Dorsolateral prefrontal cortex (tissue), 120 donors: ENCODE measurements at regions of chr1 and their contacts with region 1.

Region 1: GRCh38 chr1:41532206-41532975 is 47.9 kb upstream of the EDN2 start:
- DNase-seq: peak in 2 of 10 donors; percentile 6 to 14
- H3K4me3 ChIP-seq: no peak overlapping the region
- H3K27ac ChIP-seq: no peak overlapping the region
- H3K27me3 ChIP-seq: no peaks in the 10 kb centered on the region
- CTCF ChIP-seq: no peak

Region 2: GRCh38 chr1:41341772-41342562 is 190.4 kb before region 1 on chr1:
- intact Hi-C with region 1: no loop called
- DNase-seq: peak in 3 of 10 donors; percentile 19 to 57 (median 39)
- H3K4me3 ChIP-seq: no peak overlapping the region
- H3K27ac ChIP-seq: no peak overlapping the region
- H3K27me3 ChIP-seq: peaks cover 0 to 4% (median 0%) of the 10 kb centered on the region in 45 donors
- CTCF ChIP-seq: no peak

Region 3: GRCh38 chr1:41394959-41395956 is 137.1 kb before region 1 on chr1:
- intact Hi-C with region 1: no loop called
- DNase-seq: peak in 4 of 10 donors; percentile 14 to 61 (median 43)
- H3K4me3 ChIP-seq: peak overlapping the region in 1 of 59 donors; percentile 16
- H3K27ac ChIP-seq: no peak overlapping the region
- H3K27me3 ChIP-seq: peaks cover 0 to 5% (median 0%) of the 10 kb centered on the region in 45 donors
- CTCF ChIP-seq: no peak

Region 4: DNA sequence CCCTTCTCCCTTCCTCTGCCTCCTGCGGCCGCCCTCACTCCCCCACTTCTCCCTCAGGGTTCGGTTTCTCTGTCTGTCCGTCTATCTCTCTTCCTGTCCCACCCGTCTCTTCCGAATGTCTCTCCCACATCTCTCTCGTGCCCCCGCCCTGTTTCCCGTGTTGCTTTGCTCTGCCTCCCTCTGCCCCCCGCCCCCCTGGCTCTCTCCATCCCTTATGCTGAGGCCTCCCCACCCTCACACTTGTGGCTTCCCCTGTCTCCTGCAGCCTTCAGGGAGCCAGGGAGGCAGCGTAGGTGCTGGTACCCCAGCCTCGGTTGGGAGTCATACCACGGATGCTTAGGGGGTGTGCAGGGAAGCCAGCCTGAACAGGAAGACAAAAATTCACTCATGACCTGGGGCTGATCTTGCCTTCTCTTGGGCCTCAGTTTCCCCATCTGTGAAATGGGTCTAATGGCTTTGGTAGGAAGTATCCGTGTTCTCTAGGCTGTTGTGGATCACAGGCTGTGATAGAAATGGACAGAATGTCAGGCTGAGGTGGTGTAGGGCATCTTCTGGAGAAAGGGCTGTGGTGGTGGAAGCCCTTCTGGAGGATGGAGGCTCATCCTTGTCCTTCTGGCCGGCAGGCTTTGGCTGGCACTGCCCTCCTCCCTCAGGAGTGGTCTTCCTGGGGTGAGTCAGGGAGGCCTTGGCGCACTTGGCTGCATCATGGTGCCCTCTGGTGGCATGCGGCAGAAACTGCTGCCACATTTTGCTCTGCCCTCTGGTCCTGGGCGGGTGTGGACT is 115.6 kb before region 1 on chr1:
- intact Hi-C with region 1: no loop called
- DNase-seq: peak in 9 of 10 donors; percentile 49 to 78 (median 60)
- H3K4me3 ChIP-seq: no peak overlapping the region
- H3K27ac ChIP-seq: no peak overlapping the region
- H3K27me3 ChIP-seq: no peaks in the 10 kb centered on the region
- CTCF ChIP-seq: peak; percentile 74 to 98 (median 94)

Region 5: DNA sequence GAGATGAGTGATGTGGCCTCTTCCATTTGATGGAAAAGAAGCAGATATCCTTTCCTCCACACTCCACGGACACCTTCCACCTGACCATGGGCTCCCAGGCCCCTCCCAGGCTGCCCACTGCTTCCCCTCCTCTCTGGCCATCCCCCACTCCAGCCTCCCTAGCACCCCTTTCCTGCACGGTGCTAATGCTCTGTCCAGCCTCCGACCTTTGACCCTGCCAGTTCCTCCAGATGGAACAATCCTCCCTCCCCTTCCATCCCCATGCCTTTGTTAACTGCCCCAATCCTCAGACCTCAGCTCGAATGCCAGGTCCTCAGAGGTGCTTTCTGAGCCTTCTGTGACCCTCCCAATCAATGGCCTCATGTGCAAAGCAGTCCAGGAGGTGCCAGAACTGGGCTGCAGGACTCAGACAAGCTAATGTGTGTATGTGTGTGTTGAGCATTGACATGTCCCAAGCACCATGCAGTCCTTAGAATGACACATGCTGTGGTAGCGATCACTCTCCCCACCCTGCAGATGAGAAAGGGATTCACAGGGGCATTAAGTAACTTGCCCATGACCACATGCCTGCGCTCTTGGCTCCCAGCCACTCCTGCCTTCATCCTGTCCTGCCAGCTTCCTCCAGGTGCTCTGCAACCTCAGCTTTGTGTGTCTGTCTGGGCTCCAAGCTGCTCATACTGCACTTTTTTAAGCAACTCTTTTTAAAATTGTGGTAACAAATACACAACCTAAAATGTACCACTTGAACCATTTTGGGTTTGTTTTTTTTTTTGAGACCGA is 15.6 kb after region 1 on chr1:
- intact Hi-C with region 1: loop called in 1 of 2 experiments (anchors 1 kb)
- DNase-seq: peak in 1 of 10 donors; percentile 15
- H3K4me3 ChIP-seq: no peak overlapping the region
- H3K27ac ChIP-seq: no peak overlapping the region
- H3K27me3 ChIP-seq: no peaks in the 10 kb centered on the region
- CTCF ChIP-seq: no peak